Right ventricle myocardium superior (tissue), 1 donor: ENCODE measurements at regions of chr5 and their contacts with region 1.

Region 1: DNA sequence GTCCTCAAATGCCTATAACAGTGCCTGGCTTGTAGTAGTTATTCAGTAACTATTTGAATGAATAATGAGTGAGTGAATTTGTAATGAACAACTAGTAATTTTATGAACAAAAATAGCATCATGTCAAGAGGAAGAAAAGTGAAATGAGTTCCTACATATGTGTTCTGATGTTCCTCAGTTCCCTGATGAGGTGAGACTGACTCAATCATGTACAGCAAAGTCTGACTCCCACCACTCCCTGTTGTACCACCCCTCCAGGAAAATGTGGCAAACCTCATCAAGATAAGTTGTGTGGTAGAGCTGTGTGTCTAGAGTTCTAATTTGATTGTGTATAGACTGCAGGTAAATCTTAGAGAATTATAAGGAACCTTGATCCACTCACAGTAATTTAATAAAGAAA is 201.6 kb downstream of the GOLPH3 start:
- DNase-seq: no peak
- ATAC-seq: no peak

Region 2: GRCh38 chr5:31811210-31811609 is 161.3 kb before region 1 on chr5:
- intact Hi-C with region 1: no loop called
- DNase-seq: no peak
- ATAC-seq: no peak

Region 3: DNA sequence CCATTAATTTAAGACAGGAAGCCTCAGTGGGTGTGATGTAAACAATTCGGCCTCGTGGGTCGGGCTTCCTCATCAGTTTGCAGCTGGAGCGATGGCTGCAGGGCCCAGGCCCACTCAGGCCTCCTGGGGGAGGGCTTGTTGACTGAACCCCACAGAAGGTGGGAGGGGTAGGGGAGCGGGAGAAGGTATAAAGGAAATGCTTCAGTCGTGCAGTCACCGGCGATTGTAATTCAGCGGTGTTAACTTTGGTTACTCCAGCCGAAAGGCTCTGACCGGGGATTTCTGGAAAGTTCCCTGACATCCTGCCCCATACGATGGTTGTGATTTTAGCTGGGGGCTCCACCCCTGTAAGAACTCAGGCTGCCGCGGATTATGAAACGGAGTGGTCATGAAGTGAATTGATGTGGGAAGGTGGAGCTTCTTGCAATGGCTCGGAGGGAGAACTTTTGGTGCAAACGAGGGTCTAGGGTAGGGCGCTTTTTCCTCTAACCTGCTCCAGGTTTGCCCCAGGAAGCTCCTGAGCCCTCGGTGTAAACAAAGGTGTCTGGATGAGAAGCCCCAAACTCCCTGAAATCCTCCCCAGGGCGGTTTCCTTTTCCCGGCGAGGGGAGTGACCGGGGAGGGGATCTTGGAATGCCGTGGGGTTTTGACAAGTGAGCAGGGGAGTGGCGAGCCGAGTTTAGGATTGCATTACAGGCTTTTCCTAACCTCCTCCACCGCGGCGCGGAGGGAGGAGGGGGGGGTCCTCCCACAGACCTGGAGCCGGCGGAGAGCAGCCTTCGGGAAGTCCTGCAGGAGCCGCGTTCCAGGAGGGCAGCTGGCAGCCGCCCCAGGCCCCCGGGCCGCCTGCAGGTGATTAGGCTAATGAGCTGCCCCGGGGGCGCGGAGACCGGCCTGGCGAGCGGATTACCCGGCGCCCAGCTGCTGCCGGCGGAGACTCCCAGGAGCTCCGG is 118.1 kb before region 1 on chr5:
- intact Hi-C with region 1: no loop called
- DNase-seq: peak; percentile 59
- ATAC-seq: peak; percentile 83

Region 4: GRCh38 chr5:32017692-32018367 is 45.3 kb after region 1 on chr5:
- intact Hi-C with region 1: loop called (anchors 5 kb)
- DNase-seq: no peak
- ATAC-seq: peak; percentile 67

Region 5: DNA sequence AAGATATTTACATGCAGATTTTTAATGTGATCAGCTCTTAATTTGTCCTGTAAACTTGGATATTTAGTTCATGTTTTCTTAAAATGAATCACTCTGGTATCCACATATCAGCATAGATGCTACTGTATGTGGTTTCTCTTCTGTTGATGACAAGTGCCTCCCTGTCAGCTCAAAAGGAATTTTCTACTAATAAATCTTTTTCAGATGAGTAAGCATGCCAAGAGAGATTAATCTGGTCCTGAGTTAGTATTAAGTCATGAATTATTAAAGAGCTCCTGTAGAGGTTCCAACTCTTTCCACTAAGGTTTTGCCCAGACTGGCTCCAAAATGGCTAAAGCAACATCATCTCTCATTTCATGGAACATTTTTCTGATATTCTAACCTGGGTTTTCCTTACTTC is 72.4 kb after region 1 on chr5:
- intact Hi-C with region 1: no loop called
- DNase-seq: no peak
- ATAC-seq: no peak